Activated B cell treated with CpG ODN at 0.5 μM for 24 hours (primary cell): ENCODE measurements at regions of chr12 and their contacts with region 1.

Region 1: DNA sequence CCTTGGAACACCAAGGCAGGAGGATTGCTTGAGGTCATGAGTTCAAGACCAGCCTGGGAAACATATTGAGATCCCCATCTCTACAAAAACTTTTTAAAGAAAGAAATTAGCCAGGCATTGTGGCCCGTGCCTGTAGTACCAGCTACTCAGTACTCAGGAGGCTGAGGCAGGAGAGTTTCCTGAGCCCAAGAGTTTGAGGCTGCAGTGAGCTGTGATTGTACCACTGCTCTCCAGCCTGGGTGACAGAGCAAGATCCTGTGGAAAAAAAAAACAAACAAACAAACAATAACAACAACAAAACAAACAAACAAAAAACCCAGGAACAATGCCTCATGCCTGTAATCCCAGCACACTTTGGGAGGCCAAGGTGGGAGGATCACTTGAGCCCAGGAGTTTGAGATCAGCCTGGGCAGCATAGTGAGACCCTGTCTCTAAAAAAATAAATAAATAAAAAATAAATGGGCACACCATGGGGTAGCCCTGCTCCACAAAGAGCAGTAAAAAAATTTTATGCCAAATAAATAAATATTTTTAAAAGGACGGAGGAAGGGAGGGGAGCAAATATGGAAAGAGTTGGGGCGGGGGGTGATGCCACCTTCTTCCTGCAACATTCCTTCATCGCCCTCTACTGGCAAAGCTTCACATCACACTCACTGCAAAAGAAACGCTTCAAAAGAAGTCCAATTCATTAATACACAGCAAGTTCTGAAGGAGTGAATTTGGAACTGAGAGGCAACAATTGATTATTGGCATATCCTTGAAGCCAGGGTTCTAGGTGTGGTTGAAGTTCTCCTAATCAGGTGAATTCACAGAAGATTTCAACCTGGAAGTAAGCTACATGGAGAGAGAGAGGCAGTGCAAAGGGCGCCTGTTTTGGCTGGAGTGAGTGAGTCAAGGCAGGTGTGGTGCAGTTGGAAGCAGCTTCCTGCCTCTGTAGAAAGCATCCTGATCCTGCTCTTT is 8.8 kb upstream of the GNPTAB start:
- DNase-seq: no peak
- ATAC-seq: peak; percentile 82
- H3K4me3 Mint-ChIP-seq: no peak overlapping the region
- H3K27ac Mint-ChIP-seq: no peak overlapping the region
- H3K4me1 Mint-ChIP-seq: peaks cover 21% of the 10 kb centered on the region
- H3K27me3 Mint-ChIP-seq: no peaks in the 10 kb centered on the region
- CTCF ChIP-seq: peak; percentile 77

Region 2: GRCh38 chr12:101414533-101415119 is 425.0 kb before region 1 on chr12:
- CTCF ChIA-PET with region 1: interaction called, 29 read pairs
- POLR2A ChIA-PET with region 1: no interaction called
- intact Hi-C with region 1: loop called (anchors 1 kb)
- DNase-seq: no peak
- ATAC-seq: no peak
- H3K4me3 Mint-ChIP-seq: no peak overlapping the region
- H3K27ac Mint-ChIP-seq: no peak overlapping the region
- H3K4me1 Mint-ChIP-seq: no peaks in the 10 kb centered on the region
- H3K27me3 Mint-ChIP-seq: no peaks in the 10 kb centered on the region
- CTCF ChIP-seq: peak; percentile 24

Region 3: DNA sequence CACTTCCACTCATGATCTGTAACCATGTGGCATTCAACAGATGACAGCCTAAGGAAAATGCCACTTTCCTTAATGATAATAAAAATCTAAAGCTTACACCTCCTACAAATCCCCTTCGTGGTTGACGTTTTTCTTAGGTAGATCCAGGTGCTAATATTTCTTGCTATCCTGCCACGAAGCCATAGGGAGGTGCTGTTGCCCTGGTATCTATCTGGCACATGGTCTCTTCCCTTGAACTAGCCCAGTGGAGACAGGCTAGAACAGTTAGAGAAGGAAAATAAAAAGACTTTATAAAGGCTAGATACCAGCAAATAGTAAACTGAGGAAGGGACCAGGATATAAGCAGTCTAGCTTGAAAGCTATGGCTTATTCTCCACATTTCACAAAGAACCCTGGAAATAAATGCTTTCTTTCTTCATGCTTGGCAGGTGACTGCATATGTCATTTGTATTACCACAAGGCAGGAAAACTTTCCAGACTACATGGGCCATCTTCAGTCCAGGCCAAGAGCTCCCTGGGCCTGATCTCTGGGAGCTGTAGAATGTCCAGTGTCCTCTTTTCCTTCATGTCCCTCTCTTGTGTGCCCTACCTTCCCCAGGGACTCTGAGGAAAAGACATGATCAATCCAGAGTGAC is 349.2 kb before region 1 on chr12:
- CTCF ChIA-PET with region 1: interaction called, 4 read pairs
- POLR2A ChIA-PET with region 1: no interaction called
- intact Hi-C with region 1: loop called (anchors 1 kb)
- DNase-seq: no peak
- ATAC-seq: peak; percentile 61
- H3K4me3 Mint-ChIP-seq: no peak overlapping the region
- H3K27ac Mint-ChIP-seq: no peak overlapping the region
- H3K4me1 Mint-ChIP-seq: no peaks in the 10 kb centered on the region
- H3K27me3 Mint-ChIP-seq: peaks cover 12% of the 10 kb centered on the region
- CTCF ChIP-seq: no peak

Region 4: GRCh38 chr12:101570047-101570446 is 269.6 kb before region 1 on chr12:
- CTCF ChIA-PET with region 1: interaction called, 4 read pairs
- POLR2A ChIA-PET with region 1: no interaction called
- intact Hi-C with region 1: loop called (anchors 1 kb)
- DNase-seq: no peak
- ATAC-seq: peak; percentile 34
- H3K4me3 Mint-ChIP-seq: no peak overlapping the region
- H3K27ac Mint-ChIP-seq: no peak overlapping the region
- H3K4me1 Mint-ChIP-seq: peaks cover 4% of the 10 kb centered on the region
- H3K27me3 Mint-ChIP-seq: peaks cover 7% of the 10 kb centered on the region
- CTCF ChIP-seq: no peak